Astrocyte of the cerebellum (primary cell): ENCODE measurements at regions of chr20 and their contacts with region 1.

Region 1: GRCh38 chr20:49790077-49790798 is 22.4 kb upstream of the SLC9A8 start:
- DNase-seq: no peak
- H3K4me3 ChIP-seq: no peak overlapping the region
- CTCF ChIP-seq: no peak

Region 2: GRCh38 chr20:49668181-49668877 is 121.9 kb before region 1 on chr20:
- in situ Hi-C with region 1: loop called (anchors 10 kb)
- DNase-seq: no peak
- H3K4me3 ChIP-seq: no peak overlapping the region
- CTCF ChIP-seq: no peak

Region 3: DNA sequence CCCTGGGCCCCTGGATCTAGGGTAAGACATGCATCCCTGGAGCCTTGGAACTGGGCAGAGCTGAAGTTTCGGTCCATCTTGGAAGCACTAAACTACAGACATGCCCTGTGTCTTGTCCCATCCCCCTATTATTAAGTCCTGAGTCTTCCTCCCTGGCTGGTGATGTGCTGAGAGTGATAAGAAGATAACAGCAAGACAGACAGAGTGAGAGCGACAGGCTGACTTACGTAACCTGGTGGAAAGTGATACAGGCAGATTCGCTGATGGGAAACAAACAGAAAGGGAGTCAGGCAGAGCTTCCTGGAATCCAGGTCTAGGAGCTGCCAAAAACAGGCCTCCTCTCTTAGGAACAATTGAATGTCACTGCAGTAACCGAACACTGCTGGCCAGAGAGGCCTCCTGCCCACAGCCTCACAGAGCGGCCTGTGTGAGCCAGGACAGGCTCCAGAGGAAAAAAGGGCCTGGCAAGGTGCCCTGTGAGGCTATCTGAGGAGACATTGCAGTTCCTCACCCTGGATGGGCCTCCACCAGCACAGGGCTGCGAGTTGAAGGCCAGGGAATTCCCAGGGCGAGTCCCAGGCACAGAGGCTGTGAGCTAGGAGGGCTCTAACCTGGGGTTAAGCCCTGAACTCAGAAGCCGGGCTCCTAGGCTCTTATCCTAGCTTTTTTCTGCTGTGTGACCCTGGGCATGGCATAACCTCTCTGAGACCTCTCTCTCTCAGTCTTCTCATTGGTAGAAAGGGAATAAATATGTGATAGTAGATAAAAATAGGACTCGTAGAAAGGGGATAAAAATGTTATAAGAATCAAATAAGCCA is 42.3 kb before region 1 on chr20:
- in situ Hi-C with region 1: no loop called
- DNase-seq: peak; percentile 52
- H3K4me3 ChIP-seq: no peak overlapping the region
- CTCF ChIP-seq: no peak